Gastrocnemius medialis (tissue), 4 donors: ENCODE measurements at regions of chr3 and their contacts with region 1.

Region 1: DNA sequence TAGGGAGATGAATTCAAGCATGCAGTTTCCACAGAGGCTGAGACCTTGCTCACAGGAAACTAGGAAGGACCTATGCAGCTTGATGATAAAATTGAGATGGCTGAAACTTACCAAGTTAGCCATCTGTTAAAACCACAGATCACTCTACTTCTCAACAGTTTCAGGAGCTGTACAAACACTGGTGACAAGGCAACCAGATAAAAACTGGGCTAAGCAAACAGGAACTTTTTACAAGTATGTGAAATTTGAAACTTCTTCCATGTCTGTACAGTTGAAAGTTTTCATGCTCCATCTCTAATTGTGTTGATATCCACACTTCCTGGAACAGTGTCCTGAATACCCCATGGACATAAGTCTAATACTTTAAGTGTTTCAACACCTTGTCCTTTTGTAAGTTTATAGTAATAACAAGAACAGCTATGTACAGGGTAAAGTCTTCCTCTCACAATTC is 78.2 kb downstream of the FAIM start:
- DNase-seq: no peak
- ATAC-seq: no peak
- H3K4me3 ChIP-seq: no peak overlapping the region
- H3K27ac ChIP-seq: no peak overlapping the region
- H3K4me1 ChIP-seq: no peaks in the 10 kb centered on the region
- H3K27me3 ChIP-seq: no peaks in the 10 kb centered on the region
- CTCF ChIP-seq: no peak
- POLR2A ChIP-seq: no peak

Region 2: DNA sequence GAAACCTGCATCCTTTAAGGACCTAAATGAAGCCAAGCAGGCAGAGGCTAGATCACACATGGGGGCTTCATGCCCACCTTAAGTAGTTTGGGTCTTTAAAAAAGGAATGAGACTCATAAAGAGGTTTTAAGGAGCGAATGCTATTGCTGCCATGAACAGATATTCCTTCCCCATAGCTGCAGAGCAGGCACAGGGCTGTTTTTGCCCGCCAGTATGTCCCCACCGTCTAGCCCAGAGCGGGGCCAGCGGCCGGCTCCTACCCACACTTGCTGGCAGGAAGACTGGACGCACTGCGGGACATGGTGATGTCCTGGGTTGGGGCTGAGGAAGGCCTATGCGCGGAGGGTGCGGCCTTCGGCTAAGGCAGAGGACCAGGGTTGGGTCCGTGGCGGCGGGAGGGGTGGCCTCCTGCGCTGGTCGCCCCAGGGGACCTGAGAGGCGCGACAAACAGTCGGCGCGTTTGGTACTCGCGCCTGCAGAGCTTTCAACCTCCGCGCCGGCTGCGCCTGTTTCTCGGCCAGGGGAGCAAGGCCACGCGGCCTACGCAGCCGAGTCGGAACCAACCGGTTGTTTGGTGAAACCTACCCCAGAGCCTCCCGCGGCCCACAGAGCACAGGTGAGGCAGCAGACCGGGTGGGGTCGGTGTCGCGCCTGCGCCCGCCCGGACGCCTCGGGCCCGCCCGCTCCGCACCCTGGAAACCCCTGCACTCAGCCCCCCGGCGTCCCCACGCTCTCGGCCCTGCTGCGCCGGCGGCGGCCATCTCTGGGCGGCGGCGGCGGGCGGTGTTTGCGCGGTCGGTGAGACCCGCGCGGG is 78.3 kb before region 1 on chr3 and contains the start of gene FAIM:
- in situ Hi-C with region 1: no loop called
- intact Hi-C with region 1: loop called (anchors 5 kb)
- DNase-seq: peak; percentile 22 to 63
- ATAC-seq: peak; percentile 83 to 86
- H3K4me3 ChIP-seq: peak within 1 kb of the TSS; percentile 63 to 82 (median 73)
- H3K27ac ChIP-seq: peak within 1 kb of the TSS; percentile 85 to 92 (median 90)
- H3K4me1 ChIP-seq: peaks cover 0 to 7% of the 10 kb centered on the region in 2 donors
- H3K27me3 ChIP-seq: peaks cover 0 to 3% (median 0%) of the 10 kb centered on the region in 3 donors
- CTCF ChIP-seq: no peak
- POLR2A ChIP-seq: peak in 1 of 2 donors; percentile 6
- total RNA-seq, gene FAIM: 0.88 to 3.0 (median 1.1) TPM in 3 of 4 donors, not detected in the other

Region 3: DNA sequence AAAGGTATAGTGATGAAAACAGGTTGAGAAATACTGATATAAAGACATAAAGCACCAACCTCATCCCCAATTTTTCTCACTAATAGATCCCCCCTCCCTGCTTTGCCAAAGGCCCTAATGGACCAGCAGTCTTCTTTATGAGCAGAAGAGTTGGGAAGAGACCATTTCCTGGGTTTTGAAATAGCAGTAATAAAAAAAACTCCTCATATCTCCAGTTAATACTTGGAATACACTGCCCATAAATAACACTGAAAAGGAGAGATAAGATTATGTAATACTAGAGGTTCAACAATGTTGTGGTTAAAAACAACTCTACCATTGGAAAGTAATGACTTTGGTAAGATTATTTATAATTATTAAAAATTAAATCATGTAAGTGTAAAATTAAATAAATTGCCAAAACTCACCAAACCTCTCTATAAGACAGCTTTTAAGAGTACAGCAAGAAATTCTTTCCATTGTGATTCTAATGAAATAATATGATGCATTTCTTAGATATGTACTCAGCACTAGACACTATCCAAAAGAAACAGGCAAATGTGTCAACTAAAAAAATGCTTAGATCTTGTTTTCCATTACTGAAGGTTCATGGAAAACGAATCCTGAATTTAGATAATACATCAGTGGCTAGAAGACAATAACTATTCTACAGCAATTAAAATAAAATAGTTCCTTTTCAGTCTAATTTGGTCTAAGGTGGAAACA is 10.0 kb after region 1 on chr3:
- in situ Hi-C with region 1: no loop called
- intact Hi-C with region 1: no loop called
- DNase-seq: no peak
- ATAC-seq: no peak
- H3K4me3 ChIP-seq: no peak overlapping the region
- H3K27ac ChIP-seq: no peak overlapping the region
- H3K4me1 ChIP-seq: no peaks in the 10 kb centered on the region
- H3K27me3 ChIP-seq: no peaks in the 10 kb centered on the region
- CTCF ChIP-seq: no peak
- POLR2A ChIP-seq: no peak

Region 4: GRCh38 chr3:138717348-138717747 is 30.6 kb after region 1 on chr3:
- in situ Hi-C with region 1: no loop called
- intact Hi-C with region 1: no loop called
- DNase-seq: no peak
- ATAC-seq: no peak
- H3K4me3 ChIP-seq: no peak overlapping the region
- H3K27ac ChIP-seq: no peak overlapping the region
- H3K4me1 ChIP-seq: no peaks in the 10 kb centered on the region
- H3K27me3 ChIP-seq: no peaks in the 10 kb centered on the region
- CTCF ChIP-seq: no peak
- POLR2A ChIP-seq: no peak